GM23248 (cell line): ENCODE measurements at regions of chr1 and their contacts with region 1.

Region 1: DNA sequence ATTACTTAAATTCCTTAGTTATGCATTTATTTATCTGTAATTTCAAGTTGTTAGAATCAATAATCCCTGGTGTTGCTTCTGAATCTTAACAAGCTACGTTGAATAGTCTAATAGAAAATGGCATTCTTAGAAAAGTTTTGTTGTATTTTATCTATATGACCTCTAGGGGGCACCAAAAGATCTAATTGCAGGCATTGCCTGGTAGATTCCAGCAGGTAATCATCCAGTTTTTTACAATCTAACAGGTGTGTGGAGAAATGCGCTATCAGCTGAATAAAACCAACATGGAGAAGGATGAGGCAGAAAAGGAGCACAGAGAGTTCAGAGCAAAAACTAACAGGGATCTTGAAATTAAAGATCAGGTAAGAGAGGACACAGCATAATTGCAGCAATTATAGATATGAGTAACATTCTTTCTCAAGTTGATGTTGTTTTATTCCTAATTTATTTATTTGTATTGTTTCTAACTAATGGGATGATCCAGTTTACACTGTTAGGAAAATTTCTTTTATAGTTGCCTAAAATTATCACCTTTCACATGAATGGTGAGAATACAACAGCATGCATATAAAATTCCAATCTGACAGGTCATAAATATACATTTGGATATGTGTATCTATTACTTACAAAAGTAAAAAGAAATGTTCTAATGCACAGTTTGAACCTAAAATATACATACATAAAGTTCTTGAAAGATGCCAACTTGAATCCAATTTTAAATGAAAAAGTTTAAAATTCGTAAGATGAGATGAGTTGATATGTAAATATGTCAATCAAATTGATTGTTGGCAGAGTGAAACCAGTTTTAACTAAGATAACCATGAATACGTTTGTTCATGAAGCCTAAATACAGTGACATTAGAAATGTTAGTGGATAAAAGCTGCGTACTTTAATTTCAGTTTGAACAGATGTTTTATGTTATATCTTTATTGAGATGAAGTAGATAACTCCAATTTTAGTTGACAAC is 88.4 kb downstream of the SDCCAG8 start:
- DNase-seq: peak; percentile 65
- H3K4me3 ChIP-seq: no peak overlapping the region
- H3K27ac ChIP-seq: no peak overlapping the region
- H3K4me1 ChIP-seq: 0 out of 2 replicates have a peak, but pooled peaks cover 4% of the 10 kb centered on the region
- H3K27me3 ChIP-seq: no peaks in the 10 kb centered on the region

Region 2: GRCh38 chr1:242651817-242652216 is 692.4 kb before region 1 on chr1:
- in situ Hi-C with region 1: no loop called
- DNase-seq: no peak
- H3K4me3 ChIP-seq: no peak overlapping the region
- H3K27ac ChIP-seq: no peak overlapping the region
- H3K4me1 ChIP-seq: no peaks in the 10 kb centered on the region
- H3K27me3 ChIP-seq: no peaks in the 10 kb centered on the region

Region 3: GRCh38 chr1:244280859-244281258 is 936.6 kb after region 1 on chr1:
- in situ Hi-C with region 1: loop called (anchors 10 kb)
- DNase-seq: peak; percentile 65
- H3K4me3 ChIP-seq: no peak overlapping the region
- H3K27ac ChIP-seq: no peak overlapping the region
- H3K4me1 ChIP-seq: no peaks in the 10 kb centered on the region
- H3K27me3 ChIP-seq: no peaks in the 10 kb centered on the region